HAP-1 (cell line): ENCODE measurements at regions of chr2 and their contacts with region 1.

Region 1: DNA sequence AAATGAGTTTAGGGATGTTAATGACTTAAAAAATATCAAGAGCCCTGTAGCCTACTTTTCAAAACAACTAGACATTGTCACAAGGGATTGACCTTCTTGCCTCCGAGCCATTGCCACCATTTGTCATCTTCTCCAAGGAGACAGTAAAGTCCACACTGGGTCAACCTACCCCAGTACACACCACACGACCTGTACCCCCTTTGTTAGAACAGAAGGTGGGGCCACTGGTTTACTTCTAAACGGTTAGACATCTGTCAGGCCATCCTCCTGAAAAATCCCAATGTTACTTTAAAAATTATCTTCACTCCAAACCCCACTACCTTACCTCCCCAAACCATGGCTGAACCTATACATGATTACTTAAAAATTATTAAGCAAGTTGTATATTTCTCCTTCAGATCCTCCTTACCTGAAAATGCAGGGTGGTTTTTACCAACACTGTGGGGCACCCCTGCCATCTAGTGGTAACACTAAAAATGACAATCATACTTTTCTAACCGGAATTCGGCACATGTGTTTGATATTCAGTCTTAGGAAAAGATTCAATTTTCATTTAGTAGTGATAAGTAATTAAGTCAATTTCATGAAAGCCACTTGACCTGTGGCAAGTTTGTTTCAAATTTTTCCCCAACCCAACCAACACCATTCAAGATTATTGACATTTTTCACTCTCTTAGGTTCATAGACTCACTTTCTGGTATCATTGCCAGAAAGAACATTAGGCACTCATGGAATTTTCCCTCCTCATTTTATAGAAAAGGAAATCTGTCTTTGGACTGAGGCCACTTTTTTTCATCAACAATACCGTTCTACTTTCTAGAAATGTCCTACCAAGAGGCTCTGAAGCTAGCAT is 265.3 kb upstream of the PKDCC start:
- DNase-seq: peak; percentile 29 to 35
- H3K4me3 ChIP-seq: no peak overlapping the region
- H3K4me1 ChIP-seq: no peaks in the 10 kb centered on the region
- H3K27me3 ChIP-seq: peaks cover 6% of the 10 kb centered on the region; the same call in 1 of the 2 replicates

Region 2: DNA sequence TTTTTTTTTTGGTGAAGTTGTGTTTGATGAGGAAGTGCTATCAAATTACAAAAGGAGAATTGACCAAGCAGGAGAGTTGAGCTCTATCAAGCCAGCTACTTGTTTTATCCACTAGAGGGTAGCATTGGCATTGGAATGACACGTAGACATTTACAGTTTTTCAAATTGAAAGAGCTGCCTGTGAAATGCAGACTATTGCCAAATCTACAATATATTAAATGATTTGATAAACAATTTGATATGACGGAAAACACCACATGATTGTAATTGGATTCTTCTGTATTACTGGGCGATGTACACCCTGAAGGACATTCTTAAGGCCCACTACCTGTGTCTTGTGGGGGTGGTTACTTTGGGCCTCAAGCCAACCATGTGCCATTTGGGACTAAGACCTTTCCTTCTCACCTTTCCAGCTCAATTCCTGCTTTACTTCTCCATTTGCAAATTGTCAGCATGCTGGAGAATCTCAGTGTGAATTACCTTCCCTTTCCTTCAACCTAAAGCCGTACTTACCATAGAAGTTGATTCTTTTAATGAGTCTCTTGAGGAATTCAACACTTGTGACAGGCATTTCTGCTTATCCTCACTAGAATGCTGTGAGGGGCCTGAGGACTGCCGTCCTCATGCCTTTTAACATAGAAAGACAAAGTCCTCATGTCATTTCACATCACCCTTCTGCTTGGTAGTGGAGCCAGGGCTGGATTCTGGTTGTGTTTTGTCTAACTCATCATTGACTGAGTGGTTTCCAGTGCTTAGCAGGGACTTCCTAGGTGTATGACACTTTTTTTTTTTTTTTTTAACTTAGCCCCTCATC is 1868.7 kb before region 1 on chr2:
- in situ Hi-C with region 1: loop called (anchors 25 kb)
- DNase-seq: peak; percentile 33 to 82
- H3K4me3 ChIP-seq: no peak overlapping the region
- H3K4me1 ChIP-seq: peaks cover 12% of the 10 kb centered on the region
- H3K27me3 ChIP-seq: no peaks in the 10 kb centered on the region

Region 3: DNA sequence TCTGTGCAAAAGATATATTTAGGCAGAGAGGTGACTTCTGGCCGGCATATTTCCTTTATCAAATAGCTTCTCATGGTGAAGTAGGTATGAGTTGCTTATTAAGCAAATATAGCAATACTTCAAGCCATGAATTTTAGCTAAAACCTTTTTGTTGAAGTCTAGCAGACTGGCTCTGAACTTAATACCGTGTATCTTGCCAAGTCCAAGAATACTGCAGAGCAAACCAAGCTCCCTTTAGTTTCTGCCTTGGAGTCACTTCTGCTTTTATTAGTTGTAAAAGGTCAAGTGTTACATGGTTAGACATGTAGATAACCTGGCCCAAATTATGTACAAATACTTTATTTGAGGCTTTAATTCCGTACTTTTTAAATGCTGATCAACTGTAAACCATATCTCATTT is 362.3 kb before region 1 on chr2:
- in situ Hi-C with region 1: loop called (anchors 10 kb)
- DNase-seq: no peak
- H3K4me3 ChIP-seq: no peak overlapping the region
- H3K4me1 ChIP-seq: no peaks in the 10 kb centered on the region
- H3K27me3 ChIP-seq: peaks cover 6% of the 10 kb centered on the region; the same call in 1 of the 2 replicates